Activated T-helper 1 cell treated with anti-CD3 and anti-CD28 coated beads, Interleukin-12 subunit alpha, Interleukin-12 subunit beta, Interleukin-2, Interleukin-4 antibody, amounts not matched to agents 30 ng/mL and 10 ng/mL and 1 ng/mL, durations not matched to agents 14 hours and 24 hours and 36 hours (primary cell): ENCODE measurements at regions of chr2 and their contacts with region 1.

Region 1: DNA sequence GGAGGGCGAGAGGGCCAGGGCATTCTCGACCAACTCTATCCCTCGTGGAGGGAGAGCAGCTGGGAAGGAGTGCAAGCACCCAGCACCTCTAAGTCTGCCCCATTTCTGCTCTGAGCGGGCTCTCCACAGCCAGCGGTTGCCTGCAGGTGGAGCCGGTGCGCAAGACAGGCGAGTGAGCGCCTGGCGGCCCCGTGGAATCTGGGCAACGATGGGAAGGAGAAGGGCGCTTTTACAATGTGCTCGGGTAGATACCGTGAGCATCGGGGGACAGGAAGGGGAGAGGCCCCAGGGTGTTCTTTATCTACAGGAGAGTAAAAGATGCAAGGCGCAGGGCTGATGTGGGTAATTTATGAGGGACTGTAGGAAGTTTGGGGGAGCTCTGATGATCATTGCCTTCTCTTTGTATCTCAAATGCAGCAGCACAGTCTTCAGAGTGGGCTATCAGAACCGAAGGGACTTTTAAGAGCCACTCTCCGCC is 867 bp upstream of the TTL start:
- DNase-seq: peak; percentile 79
- H3K4me3 Mint-ChIP-seq: peak overlapping the region; percentile 87
- H3K27ac Mint-ChIP-seq: peak overlapping the region; percentile 96
- H3K4me1 Mint-ChIP-seq: peaks cover 40% of the 10 kb centered on the region
- H3K27me3 Mint-ChIP-seq: peaks cover 4% of the 10 kb centered on the region

Region 2: DNA sequence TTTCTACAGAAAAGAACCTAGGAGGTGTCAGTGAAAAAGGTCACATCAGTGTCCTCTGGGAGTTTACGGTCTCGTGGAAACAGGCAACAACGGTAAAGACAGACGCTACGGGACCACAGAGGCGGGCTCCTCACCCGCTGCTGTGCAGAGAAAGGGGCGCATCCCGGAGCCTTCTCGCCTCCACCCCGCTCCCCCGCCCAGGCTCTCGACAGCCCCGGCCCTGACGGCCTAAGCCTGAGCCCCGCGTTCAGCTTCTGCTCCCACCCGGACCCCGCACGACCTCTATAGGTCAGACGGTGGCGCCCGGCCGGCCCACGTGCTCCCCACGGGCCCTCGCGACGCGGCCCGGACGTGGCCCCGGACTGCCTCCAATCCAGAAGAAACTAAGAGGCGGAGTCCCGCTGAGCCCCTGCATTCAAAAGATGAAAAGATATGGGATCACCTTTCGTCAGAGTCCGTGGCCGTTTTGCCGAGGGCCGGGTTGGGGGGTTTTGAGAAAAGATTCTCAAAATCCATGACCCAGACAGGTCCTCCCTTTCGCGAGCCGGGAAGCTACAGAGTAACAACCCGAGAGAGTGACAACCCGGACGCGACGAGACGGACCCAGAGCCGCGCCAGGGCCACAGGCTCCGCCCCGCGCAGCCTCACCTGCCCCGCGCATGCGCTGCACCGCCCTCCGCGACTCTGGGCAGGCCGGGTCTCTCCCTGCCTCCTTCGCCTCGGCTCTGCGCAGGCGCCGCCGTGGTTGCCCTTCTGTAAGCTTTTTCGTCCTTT is 226.4 kb before region 1 on chr2 and contains the start of gene ZC3H8:
- intact Hi-C with region 1: loop called (anchors 5 kb)
- DNase-seq: peak; percentile 96
- H3K4me3 Mint-ChIP-seq: peak within 1 kb of the TSS; percentile 50
- H3K27ac Mint-ChIP-seq: peak within 1 kb of the TSS; percentile 91
- H3K4me1 Mint-ChIP-seq: peaks cover 27% of the 10 kb centered on the region
- H3K27me3 Mint-ChIP-seq: no peaks in the 10 kb centered on the region
- total RNA-seq, gene ZC3H8: 32.9 and 37.4 TPM in 2 replicates

Region 3: DNA sequence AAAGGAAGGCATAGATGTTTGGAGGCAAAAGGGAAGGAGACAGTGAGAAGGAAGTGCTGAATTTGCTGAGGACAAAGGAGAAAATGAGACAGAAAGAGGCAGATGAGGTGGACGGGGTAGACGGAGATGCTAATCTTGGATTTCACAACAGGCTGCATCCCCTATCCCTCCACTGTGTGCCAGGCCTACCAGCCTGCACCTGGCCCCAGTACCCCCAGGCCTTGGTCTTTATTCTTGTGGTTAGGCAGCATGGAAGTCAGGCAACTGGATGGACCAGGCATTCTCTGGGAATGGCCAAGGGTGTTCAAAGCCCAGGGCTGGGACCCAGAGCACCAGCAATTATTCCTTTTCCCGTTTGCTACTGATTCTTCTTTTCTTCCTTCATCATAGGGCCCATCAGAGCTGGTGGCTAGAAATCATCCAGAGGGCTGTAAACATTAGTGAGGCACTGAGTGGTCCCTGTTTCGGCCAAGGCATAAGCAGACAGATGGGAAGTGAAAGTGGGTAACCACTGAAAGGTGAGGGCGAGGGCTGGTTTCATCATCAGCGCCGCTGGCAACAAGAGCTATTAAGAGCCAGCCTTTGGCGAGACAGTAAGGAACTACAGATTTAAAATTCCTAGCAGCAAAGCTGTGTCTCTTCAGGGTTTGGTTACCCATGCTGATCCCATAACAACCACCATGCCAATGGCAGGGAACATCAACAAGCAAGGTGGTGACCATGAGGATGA is 155.3 kb after region 1 on chr2:
- intact Hi-C with region 1: no loop called
- DNase-seq: no peak
- H3K4me3 Mint-ChIP-seq: no peak overlapping the region
- H3K27ac Mint-ChIP-seq: no peak overlapping the region
- H3K4me1 Mint-ChIP-seq: peaks cover 70% of the 10 kb centered on the region
- H3K27me3 Mint-ChIP-seq: peaks cover 5% of the 10 kb centered on the region

Region 4: GRCh38 chr2:112726497-112727190 is 245.6 kb after region 1 on chr2:
- intact Hi-C with region 1: loop called (anchors 5 kb)
- DNase-seq: peak; percentile 86
- H3K4me3 Mint-ChIP-seq: no peak overlapping the region
- H3K27ac Mint-ChIP-seq: no peak overlapping the region
- H3K4me1 Mint-ChIP-seq: peaks cover 16% of the 10 kb centered on the region
- H3K27me3 Mint-ChIP-seq: no peaks in the 10 kb centered on the region